ENCODE measurements at regions of chr4 and their contacts with region 1.

Region 1: DNA sequence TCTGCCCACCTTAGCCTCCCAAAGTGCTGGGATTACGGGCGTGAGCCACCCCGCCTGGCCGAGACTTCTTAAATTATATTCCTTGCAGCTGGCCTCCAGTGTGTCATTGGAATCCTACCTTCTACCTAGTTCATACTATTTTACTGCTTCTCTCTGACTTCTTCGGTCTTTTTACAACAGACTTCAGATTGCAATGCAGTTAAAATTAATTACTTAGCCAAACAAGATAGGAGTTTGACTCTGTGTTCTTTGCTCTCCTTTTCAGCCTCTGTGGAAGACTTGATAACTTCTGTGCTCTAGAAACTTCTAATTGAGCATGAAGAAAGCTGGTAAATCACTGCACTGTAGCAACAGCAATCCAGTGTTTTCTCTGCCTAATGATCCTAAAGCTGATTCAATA is 199.5 kb downstream of the GASK1B start:
- DNase-seq: no peak
- ATAC-seq: no peak
- H3K4me3 ChIP-seq: no peak overlapping the region
- H3K27ac ChIP-seq: no peak overlapping the region
- H3K4me1 ChIP-seq: no peaks in the 10 kb centered on the region
- H3K27me3 ChIP-seq: no peaks in the 10 kb centered on the region
- CTCF ChIP-seq: no peak
- EP300 ChIP-seq: no peak
- POLR2A ChIP-seq: no peak
- RAD21 ChIP-seq: no peak

Region 2: DNA sequence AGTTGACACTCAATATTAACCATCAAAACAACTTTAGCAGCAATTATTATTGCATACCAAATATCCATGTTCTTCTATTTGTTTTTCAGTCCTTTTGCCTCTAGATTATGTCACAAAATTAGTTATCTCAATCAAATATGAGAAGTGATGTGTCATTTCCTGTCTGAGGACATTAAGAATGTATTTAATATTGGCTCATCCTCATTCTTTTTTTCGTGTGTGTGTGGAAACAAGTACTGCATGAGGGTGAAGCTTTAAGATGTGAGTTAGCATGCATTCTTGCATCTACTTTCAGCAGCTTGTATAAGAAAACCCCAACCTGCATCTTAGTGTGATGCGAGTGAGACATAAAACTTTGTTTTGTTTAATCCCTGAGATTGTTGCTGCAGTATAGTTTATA is 451.4 kb before region 1 on chr4:
- CTCF ChIA-PET with region 1: no interaction called
- POLR2A ChIA-PET with region 1: no interaction called
- in situ Hi-C with region 1: no loop called
- intact Hi-C with region 1: loop called (anchors 2 kb)
- DNase-seq: no peak
- ATAC-seq: no peak
- H3K4me3 ChIP-seq: no peak overlapping the region
- H3K27ac ChIP-seq: no peak overlapping the region
- H3K4me1 ChIP-seq: no peaks in the 10 kb centered on the region
- H3K27me3 ChIP-seq: no peaks in the 10 kb centered on the region
- CTCF ChIP-seq: no peak
- EP300 ChIP-seq: no peak
- POLR2A ChIP-seq: no peak
- RAD21 ChIP-seq: no peak

Region 3: DNA sequence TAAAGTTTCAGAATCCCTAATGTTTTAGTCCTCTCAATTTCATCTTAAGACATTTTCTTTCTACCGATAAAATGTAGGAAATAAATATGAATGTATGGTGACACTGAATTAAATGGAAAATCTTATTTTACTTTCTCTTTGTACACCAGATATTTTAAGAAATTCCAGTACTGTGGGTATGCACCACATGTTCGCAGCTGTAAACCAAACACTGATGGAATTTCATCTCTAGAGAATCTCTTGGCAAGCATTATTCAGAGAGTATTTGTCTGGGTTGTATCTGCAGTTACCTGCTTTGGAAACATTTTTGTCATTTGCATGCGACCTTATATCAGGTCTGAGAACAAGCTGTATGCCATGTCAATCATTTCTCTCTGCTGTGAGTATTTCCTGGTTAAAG is 671.5 kb after region 1 on chr4:
- CTCF ChIA-PET with region 1: no interaction called
- POLR2A ChIA-PET with region 1: no interaction called
- in situ Hi-C with region 1: no loop called
- intact Hi-C with region 1: no loop called
- DNase-seq: no peak
- ATAC-seq: no peak
- H3K4me3 ChIP-seq: no peak overlapping the region
- H3K27ac ChIP-seq: no peak overlapping the region
- H3K4me1 ChIP-seq: no peaks in the 10 kb centered on the region
- H3K27me3 ChIP-seq: peaks cover 0 to 1% of the 10 kb centered on the region in 2 experiments; a peak in 2 of 5 replicates
- CTCF ChIP-seq: no peak
- EP300 ChIP-seq: no peak
- POLR2A ChIP-seq: no peak
- RAD21 ChIP-seq: no peak